Heart right ventricle (tissue), 16 donors: ENCODE measurements at regions of chr4 and their contacts with region 1.

Region 1: DNA sequence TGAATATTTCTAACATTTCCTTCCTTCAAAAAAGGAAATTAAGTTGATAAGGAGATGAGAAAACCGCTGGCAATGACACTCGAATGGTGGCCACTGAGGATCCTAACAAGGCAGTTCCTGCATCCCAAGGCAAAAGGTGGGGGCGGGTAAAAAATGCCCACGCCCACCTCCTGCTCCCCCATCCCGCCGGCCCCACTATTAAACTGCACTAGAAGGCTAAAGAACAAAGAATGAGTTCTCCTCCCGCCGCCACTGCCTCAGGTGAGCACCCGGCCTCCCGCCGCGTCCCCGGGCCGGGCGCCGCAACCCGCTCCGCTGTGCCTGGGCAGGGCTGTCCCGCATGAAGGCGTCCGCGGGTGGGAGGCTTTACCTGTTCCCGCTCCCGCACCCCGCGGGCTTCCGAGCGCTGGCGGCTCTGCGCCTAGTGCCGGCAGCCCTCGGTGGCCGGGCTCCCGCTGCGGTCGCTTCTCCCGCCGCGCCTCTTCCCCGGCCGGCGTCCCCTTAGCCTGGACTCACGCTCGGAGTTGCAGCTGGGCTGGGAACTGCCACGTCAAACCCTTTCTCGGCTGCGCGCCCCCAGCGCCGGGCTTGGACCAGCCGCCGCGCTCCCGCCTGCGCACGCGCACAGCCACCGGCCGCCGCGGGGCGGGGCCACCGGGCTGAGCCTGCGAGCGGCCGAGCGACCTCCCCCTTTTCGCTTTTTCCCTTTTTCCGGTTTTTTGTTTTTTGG is at the start of gene SEC24D:
- DNase-seq: peak; percentile 89 to 92
- ATAC-seq: peak; percentile 91 to 98 (median 96)
- H3K4me3 ChIP-seq: peak within 1 kb of the TSS; percentile 63 to 99 (median 91)
- H3K27ac ChIP-seq: peak within 1 kb of the TSS; percentile 72 to 99 (median 95)
- H3K4me1 ChIP-seq: peaks cover 0 to 47% (median 26%) of the 10 kb centered on the region in 9 donors
- H3K27me3 ChIP-seq: no peaks in the 10 kb centered on the region
- CTCF ChIP-seq: peak in 4 of 9 donors; percentile 5 to 35 (median 17)
- total RNA-seq, gene SEC24D: 7.8 to 24.4 (median 12.1) TPM

Region 2: GRCh38 chr4:118865091-118865708 is 29.5 kb after region 1 on chr4:
- intact Hi-C with region 1: loop called in 1 of 10 experiments (anchors 5 kb)
- DNase-seq: peak in 1 of 2 donors; percentile 23
- ATAC-seq: peak; percentile 67 to 88 (median 77)
- H3K4me3 ChIP-seq: no peak overlapping the region
- H3K27ac ChIP-seq: peak overlapping the region in 2 of 10 donors; percentile 18 to 32
- H3K4me1 ChIP-seq: peaks cover 2 to 21% (median 10%) of the 10 kb centered on the region in 9 donors
- H3K27me3 ChIP-seq: no peaks in the 10 kb centered on the region
- CTCF ChIP-seq: peak; percentile 29 to 76 (median 58)

Region 3: GRCh38 chr4:118888666-118889311 is 53.1 kb after region 1 on chr4 and contains the start of gene SYNPO2:
- intact Hi-C with region 1: loop called in 4 of 10 experiments (anchors 2 to 10 kb)
- DNase-seq: peak; percentile 81 to 84
- ATAC-seq: peak; percentile 84 to 94 (median 90)
- H3K4me3 ChIP-seq: peak within 1 kb of the TSS; percentile 34 to 74 (median 66)
- H3K27ac ChIP-seq: peak within 1 kb of the TSS; percentile 78 to 93 (median 85)
- H3K4me1 ChIP-seq: peaks cover 0 to 19% (median 15%) of the 10 kb centered on the region in 9 donors
- H3K27me3 ChIP-seq: peaks cover 0 to 19% (median 0%) of the 10 kb centered on the region in 7 donors
- CTCF ChIP-seq: no peak
- total RNA-seq, gene SYNPO2: 197 to 405 (median 267) TPM